ENCODE measurements at regions of chr3 and their contacts with region 1.

Region 1: GRCh38 chr3:137105277-137105977 is 147.6 kb downstream of the IL20RB start:
- DNase-seq: peak in 2 of 5 donors; percentile 17 to 36
- H3K4me3 ChIP-seq: peak overlapping the region; percentile 18
- H3K27ac ChIP-seq: no peak overlapping the region
- H3K4me1 ChIP-seq: no peaks in the 10 kb centered on the region
- H3K27me3 ChIP-seq: no peaks in the 10 kb centered on the region
- CTCF ChIP-seq: peak; percentile 42 to 74 (median 56)
- EP300 ChIP-seq: no peak
- POLR2A ChIP-seq: no peak

Region 2: DNA sequence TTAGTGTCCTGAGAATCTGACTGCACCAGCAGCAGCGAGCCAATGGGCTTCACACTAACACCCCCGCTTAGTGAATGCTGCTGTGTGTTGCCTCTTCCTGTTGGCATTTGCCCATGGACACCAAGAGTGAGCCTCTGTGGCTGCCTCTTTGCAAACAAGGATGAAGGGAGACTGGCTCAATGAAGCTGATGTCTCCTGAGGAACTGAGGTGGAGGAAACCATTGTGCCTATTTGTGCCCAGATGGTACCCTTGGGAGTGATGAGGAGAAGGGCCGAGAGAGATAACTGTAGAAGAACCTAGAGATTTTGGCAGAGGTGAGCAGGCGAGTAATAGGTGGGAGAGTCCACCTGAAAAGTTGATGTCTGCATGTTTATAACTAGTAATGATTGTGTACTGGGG is 96.5 kb before region 1 on chr3:
- intact Hi-C with region 1: no loop called
- DNase-seq: no peak
- H3K4me3 ChIP-seq: no peak overlapping the region
- H3K27ac ChIP-seq: no peak overlapping the region
- H3K4me1 ChIP-seq: no peaks in the 10 kb centered on the region
- H3K27me3 ChIP-seq: no peaks in the 10 kb centered on the region
- CTCF ChIP-seq: no peak
- EP300 ChIP-seq: no peak
- POLR2A ChIP-seq: no peak

Region 3: GRCh38 chr3:137385922-137386321 is 280.5 kb after region 1 on chr3:
- intact Hi-C with region 1: no loop called
- DNase-seq: no peak
- H3K4me3 ChIP-seq: no peak overlapping the region
- H3K27ac ChIP-seq: no peak overlapping the region
- H3K4me1 ChIP-seq: no peaks in the 10 kb centered on the region
- H3K27me3 ChIP-seq: no peaks in the 10 kb centered on the region
- CTCF ChIP-seq: no peak
- EP300 ChIP-seq: no peak
- POLR2A ChIP-seq: no peak

Region 4: GRCh38 chr3:137789236-137789635 is 683.8 kb after region 1 on chr3:
- intact Hi-C with region 1: loop called in 1 of 4 experiments (anchors 10 kb)
- DNase-seq: no peak
- H3K4me3 ChIP-seq: no peak overlapping the region
- H3K27ac ChIP-seq: no peak overlapping the region
- H3K4me1 ChIP-seq: no peaks in the 10 kb centered on the region
- H3K27me3 ChIP-seq: no peaks in the 10 kb centered on the region
- CTCF ChIP-seq: no peak
- EP300 ChIP-seq: no peak
- POLR2A ChIP-seq: no peak

Region 5: GRCh38 chr3:137946345-137946973 is 841.0 kb after region 1 on chr3:
- intact Hi-C with region 1: loop called in 3 of 4 experiments (anchors 10 kb)
- DNase-seq: peak; percentile 18 to 40 (median 27)
- H3K4me3 ChIP-seq: no peak overlapping the region
- H3K27ac ChIP-seq: no peak overlapping the region
- H3K4me1 ChIP-seq: no peaks in the 10 kb centered on the region
- H3K27me3 ChIP-seq: no peaks in the 10 kb centered on the region
- CTCF ChIP-seq: peak in 2 of 3 donors; percentile 31 to 49
- EP300 ChIP-seq: no peak
- POLR2A ChIP-seq: no peak

Region 6: GRCh38 chr3:137970914-137971831 is 865.7 kb after region 1 on chr3:
- intact Hi-C with region 1: loop called in 1 of 4 experiments (anchors 10 kb)
- DNase-seq: peak; percentile 46 to 80 (median 61)
- H3K4me3 ChIP-seq: no peak overlapping the region
- H3K27ac ChIP-seq: no peak overlapping the region
- H3K4me1 ChIP-seq: no peaks in the 10 kb centered on the region
- H3K27me3 ChIP-seq: no peaks in the 10 kb centered on the region
- CTCF ChIP-seq: peak; percentile 15 to 32 (median 27)
- EP300 ChIP-seq: no peak
- POLR2A ChIP-seq: no peak

Measured in ovary (tissue), 10 donors.